ENCODE measurements at regions of chr21 and their contacts with region 1.

Region 1: GRCh38 chr21:42593007-42593806 is 60.2 kb upstream of the PDE9A start:
- DNase-seq: no peak
- H3K4me3 ChIP-seq: no peak overlapping the region
- H3K27me3 ChIP-seq: no peaks in the 10 kb centered on the region; the same call in 1 of the 2 replicates
- CTCF ChIP-seq: peak; percentile 75

Region 2: DNA sequence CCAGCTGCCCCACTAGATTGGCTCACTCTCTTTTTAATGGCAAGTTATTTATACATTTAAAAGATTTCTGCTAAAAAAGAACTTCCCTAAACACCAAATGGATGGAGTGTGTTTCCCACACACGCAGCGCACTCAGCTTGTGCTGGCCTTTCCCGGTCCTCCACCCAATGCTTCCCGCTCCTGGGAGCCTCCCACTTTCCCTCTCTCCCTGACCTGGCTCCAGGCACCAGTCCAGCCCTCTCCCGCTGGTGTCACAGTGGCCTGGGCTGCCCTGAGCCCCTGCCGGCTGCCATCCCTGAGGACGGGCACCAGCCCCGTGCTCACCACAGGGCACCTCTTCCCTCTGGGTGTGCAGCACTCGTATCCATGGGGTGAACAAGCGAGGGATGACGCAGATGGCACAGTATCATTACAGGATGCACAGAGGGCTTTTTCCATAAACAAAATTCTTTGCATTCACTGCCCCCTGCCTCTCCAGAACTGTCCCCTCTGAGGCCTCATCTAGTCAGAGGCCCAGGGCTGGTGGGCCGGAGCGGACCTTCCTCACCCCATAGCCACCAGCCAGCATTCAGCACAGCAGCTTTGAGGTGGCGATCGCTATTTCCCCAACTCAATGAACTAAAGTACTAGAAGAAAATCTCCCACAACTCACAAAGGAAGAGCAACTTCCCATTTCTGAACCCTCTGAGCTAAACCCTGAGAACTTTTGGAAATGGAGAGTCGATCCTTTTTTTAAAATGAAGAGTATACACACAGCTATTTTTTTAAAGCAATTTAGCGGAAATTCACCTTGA is 11.0 kb before region 1 on chr21:
- CTCF ChIA-PET with region 1: interaction called, 11 read pairs
- POLR2A ChIA-PET with region 1: no interaction called
- DNase-seq: no peak
- H3K4me3 ChIP-seq: no peak overlapping the region
- H3K27me3 ChIP-seq: no peaks in the 10 kb centered on the region
- CTCF ChIP-seq: no peak

Region 3: GRCh38 chr21:42818328-42818749 is 225.1 kb after region 1 on chr21:
- CTCF ChIA-PET with region 1: interaction called, 22 read pairs
- POLR2A ChIA-PET with region 1: no interaction called
- DNase-seq: no peak
- H3K4me3 ChIP-seq: no peak overlapping the region
- H3K27me3 ChIP-seq: no peaks in the 10 kb centered on the region
- CTCF ChIP-seq: peak; percentile 74

Measured in BJ (cell line).